ENCODE measurements at regions of chr19 and their contacts with region 1.

Region 1: DNA sequence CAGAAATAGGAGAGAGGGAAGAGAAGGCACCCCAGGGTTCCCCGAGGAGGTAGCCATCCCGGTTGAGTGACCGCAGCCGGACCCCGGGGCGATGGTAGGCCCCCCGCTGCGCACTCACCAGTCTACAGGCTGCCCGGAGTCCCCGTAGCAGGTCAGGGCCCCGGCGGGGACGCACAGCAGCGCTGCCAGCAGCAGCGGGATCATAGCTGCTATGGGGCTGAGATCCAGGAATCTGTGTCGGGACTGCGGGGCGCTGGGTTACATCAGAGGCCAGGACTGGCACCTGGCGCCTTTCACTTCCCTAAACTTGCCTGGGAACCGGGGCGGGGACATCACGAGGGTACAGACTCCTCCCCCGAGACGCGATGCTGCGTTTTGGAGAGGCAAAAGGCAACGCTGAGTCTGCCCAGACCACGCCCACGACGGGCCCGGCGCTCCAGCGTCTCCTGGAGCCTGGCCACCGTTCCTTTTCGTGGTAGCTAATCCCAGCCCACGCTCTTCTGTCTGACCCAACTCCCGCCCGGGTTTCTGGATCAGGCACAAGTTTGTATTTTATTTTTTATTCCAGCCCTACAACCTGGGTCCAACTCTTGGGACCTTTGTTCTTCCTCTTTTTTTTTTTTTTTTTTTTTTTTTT is at the start of gene DNASE2:
- DNase-seq: peak; percentile 97
- ATAC-seq: peak; percentile 66
- H3K4me3 Mint-ChIP-seq: peak within 1 kb of the TSS; percentile 90
- H3K27ac Mint-ChIP-seq: peak within 1 kb of the TSS; percentile 94
- H3K4me1 Mint-ChIP-seq: peaks cover 8% of the 10 kb centered on the region
- H3K27me3 Mint-ChIP-seq: peaks cover 30% of the 10 kb centered on the region
- CTCF ChIP-seq: no peak
- total RNA-seq, gene DNASE2: 31.7 to 35.7 TPM (median 33.4 TPM) in 3 replicates

Region 2: DNA sequence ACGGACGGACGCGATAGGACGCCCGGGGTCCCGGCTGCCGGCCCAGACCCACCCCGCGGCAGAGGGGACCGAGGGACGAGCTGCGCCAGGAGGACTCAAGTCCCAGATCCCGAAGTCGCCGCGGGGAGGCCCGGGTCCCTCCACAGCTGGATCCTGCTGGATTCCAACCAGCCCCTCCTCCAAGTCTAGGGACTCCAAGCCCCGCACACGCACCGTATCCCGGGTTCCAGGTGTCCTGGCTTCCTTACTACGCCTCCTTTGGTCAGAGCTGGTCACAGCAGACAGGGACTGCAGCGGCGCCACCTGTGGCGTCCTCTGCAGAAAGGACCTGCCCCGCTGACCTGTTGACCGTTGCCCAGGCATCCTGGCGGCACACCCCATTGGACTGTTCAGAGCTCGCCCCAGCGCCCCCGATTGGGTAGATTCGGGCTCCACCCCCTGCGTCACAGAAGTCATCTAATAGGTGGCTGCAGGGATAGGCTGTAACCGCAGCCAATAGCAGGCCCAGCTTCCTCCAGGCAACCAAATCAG is 367.7 kb before region 1 on chr19:
- CTCF ChIA-PET with region 1: no interaction called
- POLR2A ChIA-PET with region 1: no interaction called
- DNase-seq: peak; percentile 75
- ATAC-seq: peak; percentile 89
- H3K4me3 Mint-ChIP-seq: peak overlapping the region; percentile 47
- H3K27ac Mint-ChIP-seq: no peak overlapping the region
- H3K4me1 Mint-ChIP-seq: no peaks in the 10 kb centered on the region
- H3K27me3 Mint-ChIP-seq: no peaks in the 10 kb centered on the region
- CTCF ChIP-seq: no peak; the same call in 1 of the 2 replicates

Region 3: DNA sequence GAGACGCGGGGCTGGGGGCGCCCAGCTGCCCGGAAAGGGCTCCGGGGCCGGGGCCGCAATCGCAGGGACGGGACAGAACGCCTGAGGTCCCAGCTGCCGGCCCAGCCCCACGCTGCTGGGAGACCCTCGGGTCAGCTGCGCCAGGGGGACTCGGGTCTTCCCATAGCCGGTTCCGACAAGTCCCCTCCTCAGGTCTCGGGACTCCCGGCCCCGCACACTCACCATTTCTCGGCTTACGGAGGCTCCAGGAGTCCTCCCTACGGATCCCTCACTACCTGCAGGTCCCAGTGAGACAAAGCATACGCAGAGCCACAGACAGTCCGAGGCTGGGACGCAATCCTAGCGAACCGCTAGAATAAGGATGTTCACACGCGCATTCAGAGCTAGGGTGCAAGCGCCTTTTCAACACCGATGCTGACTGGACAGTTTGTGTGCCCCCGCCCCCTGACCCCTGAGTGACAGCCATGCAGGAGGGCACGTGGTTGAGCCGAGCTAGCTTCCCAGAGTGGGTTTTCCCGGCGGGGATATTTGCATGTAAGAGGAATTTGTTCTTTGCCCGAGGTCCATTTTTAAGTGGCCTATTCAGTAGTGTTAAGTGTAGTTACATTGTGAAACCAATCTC is 284.3 kb before region 1 on chr19:
- CTCF ChIA-PET with region 1: no interaction called
- POLR2A ChIA-PET with region 1: interaction called, 13 read pairs
- DNase-seq: peak; percentile 44
- ATAC-seq: peak; percentile 41
- H3K4me3 Mint-ChIP-seq: peak overlapping the region; percentile 44
- H3K27ac Mint-ChIP-seq: peak overlapping the region; percentile 54; the same call in 1 of the 2 replicates
- H3K4me1 Mint-ChIP-seq: peaks cover 4% of the 10 kb centered on the region; the same call in 1 of the 2 replicates
- H3K27me3 Mint-ChIP-seq: no peaks in the 10 kb centered on the region; the same call in 1 of the 2 replicates
- CTCF ChIP-seq: no peak

Region 4: DNA sequence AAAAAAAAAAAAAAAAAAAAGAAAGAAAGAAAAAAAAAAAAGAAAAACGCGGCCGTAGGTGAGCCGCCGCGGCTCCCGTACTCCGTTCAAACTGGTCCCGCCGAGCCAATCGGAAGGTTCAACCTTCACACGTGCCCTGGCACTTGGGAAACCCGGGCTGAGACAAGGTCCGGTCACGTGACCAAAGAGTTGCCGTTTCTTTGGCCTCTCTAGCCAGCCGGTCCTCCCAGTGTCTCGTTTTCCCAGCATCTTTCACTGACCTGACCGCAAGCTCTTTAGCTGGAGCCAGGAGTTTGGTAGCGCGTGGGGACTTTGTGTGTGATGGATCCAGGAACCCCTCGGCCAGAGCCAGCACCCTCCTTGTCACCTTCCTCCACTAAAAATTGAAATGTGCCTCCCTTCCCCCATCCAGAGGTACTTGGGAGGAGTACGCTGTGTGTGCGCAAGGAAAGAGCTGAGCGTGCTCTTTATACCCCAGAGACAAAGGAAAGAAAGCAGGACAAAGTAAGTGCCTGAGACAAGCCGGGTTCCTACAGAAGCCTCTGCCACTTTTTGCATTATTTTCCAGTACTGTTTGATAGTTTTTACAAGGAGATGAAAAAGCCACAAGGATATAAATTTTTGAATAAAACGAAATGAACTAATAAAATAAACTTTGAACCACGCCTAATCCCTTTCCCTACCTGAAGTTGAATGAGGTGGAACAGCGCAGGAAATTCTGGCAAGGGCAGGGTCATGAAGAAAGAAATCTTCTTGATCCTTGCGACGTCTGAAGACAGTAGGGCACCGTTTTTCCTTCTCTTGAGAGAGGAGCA is 158.5 kb before region 1 on chr19:
- CTCF ChIA-PET with region 1: interaction called, 12 read pairs
- POLR2A ChIA-PET with region 1: interaction called, 3 read pairs
- DNase-seq: peak; percentile 96
- ATAC-seq: peak; percentile 69
- H3K4me3 Mint-ChIP-seq: peak overlapping the region; percentile 93
- H3K27ac Mint-ChIP-seq: peak overlapping the region; percentile 99
- H3K4me1 Mint-ChIP-seq: peaks cover 23% of the 10 kb centered on the region
- H3K27me3 Mint-ChIP-seq: no peaks in the 10 kb centered on the region
- CTCF ChIP-seq: no peak

Region 5: DNA sequence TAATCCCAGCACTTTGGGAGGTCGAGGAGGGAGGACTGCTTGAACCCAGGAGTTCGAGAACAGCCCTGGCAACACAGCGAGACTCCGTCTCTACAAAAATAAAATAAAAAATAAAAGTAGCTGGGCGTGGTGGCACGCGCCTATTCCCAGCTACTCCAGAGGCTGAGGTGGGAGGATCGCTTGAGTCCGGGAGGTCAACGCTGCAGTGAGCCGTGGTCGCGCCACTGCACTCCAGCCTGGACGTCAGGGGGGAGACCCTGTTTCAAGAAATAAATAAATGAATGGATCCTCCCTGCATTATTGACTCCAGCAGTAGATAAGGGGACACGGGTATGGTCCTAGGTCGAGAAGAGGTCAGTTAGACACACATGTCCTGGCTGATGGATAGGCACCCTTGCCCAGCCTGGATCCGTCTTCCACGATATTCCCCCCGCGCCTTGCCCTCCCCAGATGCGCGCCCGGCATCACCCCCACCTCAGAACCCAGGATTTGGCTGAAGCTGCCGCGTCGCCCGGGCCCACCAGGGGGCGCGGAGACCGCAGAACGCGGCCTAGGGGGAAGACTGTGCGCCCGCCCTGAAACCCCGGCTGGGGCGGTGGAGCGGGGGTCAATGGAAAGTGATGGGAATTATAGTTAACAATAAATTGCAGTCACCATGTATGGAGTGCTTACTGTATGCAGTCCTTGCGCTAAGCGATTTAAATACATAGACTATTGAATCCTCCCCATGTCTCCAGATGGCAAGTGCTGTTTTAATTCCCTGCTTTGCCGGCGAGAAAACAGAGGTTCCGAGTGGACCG is 103.9 kb before region 1 on chr19:
- CTCF ChIA-PET with region 1: interaction called, 10 read pairs
- POLR2A ChIA-PET with region 1: interaction called, 3 read pairs
- DNase-seq: peak; percentile 91
- ATAC-seq: peak; percentile 39
- H3K4me3 Mint-ChIP-seq: peak overlapping the region; percentile 79
- H3K27ac Mint-ChIP-seq: peak overlapping the region; percentile 49
- H3K4me1 Mint-ChIP-seq: peaks cover 21% of the 10 kb centered on the region
- H3K27me3 Mint-ChIP-seq: no peaks in the 10 kb centered on the region; the same call in 1 of the 2 replicates
- CTCF ChIP-seq: peak; percentile 74

Region 6: GRCh38 chr19:12825254-12826131 is 55.8 kb before region 1 on chr19:
- CTCF ChIA-PET with region 1: interaction called, 17 read pairs
- POLR2A ChIA-PET with region 1: interaction called, 3 read pairs
- DNase-seq: peak; percentile 94
- ATAC-seq: peak; percentile 85
- H3K4me3 Mint-ChIP-seq: peak overlapping the region; percentile 77
- H3K27ac Mint-ChIP-seq: peak overlapping the region; percentile 89
- H3K4me1 Mint-ChIP-seq: peaks cover 21% of the 10 kb centered on the region
- H3K27me3 Mint-ChIP-seq: peaks cover 31% of the 10 kb centered on the region
- CTCF ChIP-seq: peak; percentile 60

Region 7: GRCh38 chr19:12913011-12913561 is 31.8 kb after region 1 on chr19:
- CTCF ChIA-PET with region 1: interaction called, 25 read pairs
- POLR2A ChIA-PET with region 1: interaction called, 5 read pairs
- DNase-seq: peak; percentile 67
- ATAC-seq: peak; percentile 80
- H3K4me3 Mint-ChIP-seq: peak overlapping the region; percentile 53
- H3K27ac Mint-ChIP-seq: peak overlapping the region; percentile 94
- H3K4me1 Mint-ChIP-seq: peaks cover 27% of the 10 kb centered on the region
- H3K27me3 Mint-ChIP-seq: peaks cover 10% of the 10 kb centered on the region
- CTCF ChIP-seq: no peak

Region 8: DNA sequence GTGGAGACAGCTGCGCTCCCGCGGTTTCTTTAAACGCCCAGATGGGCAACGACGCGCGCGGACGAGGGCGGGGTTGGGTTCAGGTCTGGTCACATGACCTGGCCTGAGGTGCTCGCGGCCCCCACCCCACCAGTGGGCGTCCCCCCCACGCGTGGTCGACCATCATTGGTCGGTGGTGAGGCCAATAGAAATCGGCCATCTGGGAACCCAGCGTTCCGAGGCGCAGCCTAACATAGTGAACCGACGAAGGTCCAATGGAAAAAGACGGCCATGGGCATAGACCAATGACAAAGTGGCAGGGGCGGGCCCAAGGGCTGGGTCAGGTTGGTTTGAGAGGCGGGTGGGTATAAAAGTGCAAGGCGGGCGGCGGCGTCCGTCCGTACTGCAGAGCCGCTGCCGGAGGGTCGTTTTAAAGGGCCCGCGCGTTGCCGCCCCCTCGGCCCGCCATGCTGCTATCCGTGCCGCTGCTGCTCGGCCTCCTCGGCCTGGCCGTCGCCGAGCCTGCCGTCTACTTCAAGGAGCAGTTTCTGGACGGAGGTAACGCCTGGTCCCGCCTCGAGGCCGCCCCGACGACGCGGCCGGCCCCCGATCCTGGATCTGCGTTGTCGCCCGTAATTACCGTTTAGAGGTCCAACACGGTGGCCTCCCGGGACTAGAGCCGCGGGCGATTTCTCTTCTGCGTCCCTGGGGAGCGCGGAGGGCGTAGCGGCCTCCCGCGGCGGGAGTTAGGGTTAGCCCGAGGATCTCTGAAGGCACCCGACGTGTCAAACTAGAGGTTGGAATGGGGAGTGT is 57.1 kb after region 1 on chr19 and contains the start of gene CALR:
- CTCF ChIA-PET with region 1: interaction called, 22 read pairs
- POLR2A ChIA-PET with region 1: interaction called, 13 read pairs
- DNase-seq: peak; percentile 99
- ATAC-seq: peak; percentile 90
- H3K4me3 Mint-ChIP-seq: peak within 1 kb of the TSS; percentile 99
- H3K27ac Mint-ChIP-seq: peak within 1 kb of the TSS; percentile 91
- H3K4me1 Mint-ChIP-seq: peaks cover 35% of the 10 kb centered on the region
- H3K27me3 Mint-ChIP-seq: no peaks in the 10 kb centered on the region
- CTCF ChIP-seq: no peak
- total RNA-seq, gene CALR: 977 to 1,088 TPM (median 978 TPM) in 3 replicates